ENCODE measurements at regions of chr9 and their contacts with region 1.

Region 1: DNA sequence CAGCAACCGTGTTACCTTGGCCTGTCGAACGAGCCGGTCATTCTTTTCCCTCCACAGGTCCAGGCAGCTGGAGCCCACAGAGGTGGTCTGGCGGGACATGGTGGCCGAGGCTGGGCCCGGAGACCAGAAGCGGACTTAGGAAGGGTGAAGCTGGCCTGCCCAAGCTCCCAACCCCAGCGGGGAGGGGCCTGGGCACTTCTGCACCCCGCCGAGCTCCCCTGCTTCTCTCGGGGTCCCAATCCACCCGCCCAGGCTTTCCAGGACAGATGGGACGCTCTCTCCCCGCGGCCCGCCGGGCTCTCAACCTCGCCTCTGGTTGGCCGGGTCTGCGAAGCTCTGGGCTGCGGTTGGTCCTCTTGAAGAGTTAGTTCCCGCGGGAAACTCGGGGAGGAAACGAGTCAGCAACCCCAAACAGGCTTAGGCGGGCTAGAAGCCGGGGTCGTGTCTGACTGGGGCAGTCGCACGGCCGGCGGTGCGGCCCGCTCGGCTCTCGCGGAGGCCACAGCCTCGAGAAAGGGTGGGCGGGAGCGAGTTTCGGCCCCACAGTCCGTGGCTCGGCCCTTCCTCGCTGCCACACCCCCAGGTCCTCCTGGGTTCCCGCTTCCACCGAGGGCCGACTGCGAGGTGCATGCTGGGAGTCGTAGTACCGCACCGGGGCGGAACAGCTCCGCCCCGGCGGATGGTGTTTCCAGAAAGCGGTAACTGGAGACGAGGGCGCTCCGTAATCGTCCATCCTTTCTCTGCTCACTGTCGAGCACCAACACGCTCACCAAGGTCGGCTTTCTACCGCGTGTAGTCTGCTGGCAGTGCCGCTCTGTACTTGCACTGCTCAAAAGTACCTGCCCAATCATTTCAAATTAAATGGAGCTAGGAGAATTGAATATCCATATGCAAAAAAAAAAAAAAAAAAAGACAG is at the start of gene FANCG:
- DNase-seq: peak; percentile 93
- H3K4me3 ChIP-seq: peak within 1 kb of the TSS; percentile 80
- H3K27ac ChIP-seq: peak within 1 kb of the TSS; percentile 80
- H3K4me1 ChIP-seq: peaks cover 26% of the 10 kb centered on the region
- CTCF ChIP-seq: no peak; the same call in 1 of the 2 replicates
- total RNA-seq, gene FANCG: 85.1 and 86.5 TPM in 2 replicates

Region 2: GRCh38 chr9:35096035-35096849 is 16.6 kb after region 1 on chr9 and contains the start of gene PIGO:
- CTCF ChIA-PET with region 1: no interaction called
- POLR2A ChIA-PET with region 1: interaction called, 32 read pairs
- intact Hi-C with region 1: no loop called
- DNase-seq: peak; percentile 92
- H3K4me3 ChIP-seq: peak within 1 kb of the TSS; percentile 79
- H3K27ac ChIP-seq: peak within 1 kb of the TSS; percentile 80
- H3K4me1 ChIP-seq: peaks cover 16% of the 10 kb centered on the region
- CTCF ChIP-seq: peak; percentile 82
- total RNA-seq, gene PIGO: 12.7 and 16.0 TPM in 2 replicates

Region 3: DNA sequence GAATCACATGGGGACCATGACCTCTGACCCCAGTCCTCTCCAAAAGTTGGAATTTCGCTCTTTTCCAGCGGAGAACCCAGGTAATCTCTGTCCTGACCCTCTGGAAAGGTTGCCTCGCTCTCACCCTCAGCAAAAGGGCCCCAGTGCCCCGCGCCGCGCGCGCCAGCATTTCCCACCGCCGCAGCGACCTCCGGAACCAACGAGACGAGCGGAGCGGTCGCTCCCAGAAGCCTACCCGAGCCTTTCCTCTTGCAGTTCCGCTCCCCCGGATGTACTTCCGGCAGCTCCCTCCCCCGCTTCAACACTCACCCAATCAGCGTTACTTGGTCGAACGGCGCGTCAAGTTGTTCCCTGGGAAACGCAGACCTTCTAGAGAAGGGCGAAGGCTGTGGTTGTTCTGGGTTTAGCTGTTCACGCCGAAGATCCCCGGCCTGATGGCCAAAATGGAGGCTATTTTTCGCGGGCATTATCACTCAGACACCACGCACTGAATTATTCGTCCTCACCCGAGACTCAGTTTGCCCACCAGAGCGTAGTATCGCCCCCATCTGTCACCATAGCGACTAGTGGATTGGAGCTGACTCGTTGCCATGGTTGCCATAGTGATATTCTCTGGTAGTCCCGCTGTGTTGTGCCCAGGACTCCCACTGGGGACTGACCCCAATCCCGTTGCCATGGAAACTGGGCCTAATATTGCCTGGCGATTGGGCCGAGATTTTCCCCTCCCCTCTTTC is 23.4 kb after region 1 on chr9 and contains the start of gene STOML2:
- CTCF ChIA-PET with region 1: no interaction called
- POLR2A ChIA-PET with region 1: interaction called, 12 read pairs
- intact Hi-C with region 1: loop called (anchors 1 kb)
- DNase-seq: peak; percentile 95
- H3K4me3 ChIP-seq: peak within 1 kb of the TSS; percentile 95
- H3K27ac ChIP-seq: peak within 1 kb of the TSS; percentile 55
- H3K4me1 ChIP-seq: peaks cover 18% of the 10 kb centered on the region
- CTCF ChIP-seq: peak; percentile 31; the same call in 1 of the 2 replicates
- total RNA-seq, gene STOML2: 152 and 158 TPM in 2 replicates

Measured in OCI-LY7 (cell line).